ENCODE measurements at regions of chr10 and their contacts with region 1.

Region 1: DNA sequence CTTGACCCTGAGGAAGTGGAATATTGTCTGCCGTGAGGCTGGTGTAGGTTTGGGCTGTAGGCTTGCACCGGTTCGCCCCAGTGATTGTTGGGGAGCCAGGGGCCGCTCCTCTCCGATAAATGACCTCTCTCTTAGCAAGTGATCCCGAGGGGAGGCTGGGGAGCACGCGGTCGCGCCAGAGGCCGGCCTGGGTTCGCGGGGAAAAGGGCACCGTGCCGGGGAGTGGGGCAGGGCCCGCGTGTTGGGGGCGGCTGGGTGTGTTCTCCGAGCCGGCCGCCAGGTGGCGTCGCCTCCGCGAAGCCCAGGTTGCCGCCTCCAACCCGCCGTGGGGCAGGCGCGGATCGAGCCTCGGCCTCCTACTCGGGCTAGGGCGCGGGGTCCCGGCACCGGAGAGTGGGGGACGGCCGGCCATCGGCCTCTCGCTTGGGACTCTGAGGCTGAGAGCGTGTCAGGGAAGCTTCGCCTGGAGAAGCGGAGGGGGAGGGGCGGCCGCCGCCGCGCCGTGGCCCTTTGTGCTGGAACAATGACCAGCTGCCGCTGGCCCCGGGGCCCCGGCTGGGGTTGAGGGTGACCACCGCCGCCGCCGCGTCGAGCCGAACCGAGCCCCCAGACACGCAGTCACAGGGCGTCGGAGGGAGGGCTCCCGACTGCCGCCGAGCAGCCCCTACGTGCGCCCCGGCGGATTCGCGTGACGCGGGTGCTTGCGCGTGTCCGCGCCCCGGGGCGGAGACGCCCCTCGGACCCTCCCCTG is 442 bp upstream of the LZTS2 start:
- DNase-seq: peak; percentile 92
- CTCF ChIP-seq: peak; percentile 77

Region 2: GRCh38 chr10:100986952-100987750 is 12.0 kb before region 1 on chr10 and contains the starts of genes MRPL43 and TWNK:
- CTCF ChIA-PET with region 1: interaction called, 94 read pairs
- POLR2A ChIA-PET with region 1: no interaction called
- DNase-seq: peak; percentile 92
- CTCF ChIP-seq: no peak

Region 3: GRCh38 chr10:101031128-101031795 is 32.1 kb after region 1 on chr10 and contains the starts of genes PDZD7 and SFXN3:
- CTCF ChIA-PET with region 1: interaction called, 16 read pairs
- POLR2A ChIA-PET with region 1: no interaction called
- DNase-seq: peak; percentile 97
- CTCF ChIP-seq: no peak